ENCODE measurements at regions of chr18 and their contacts with region 1.

Region 1: DNA sequence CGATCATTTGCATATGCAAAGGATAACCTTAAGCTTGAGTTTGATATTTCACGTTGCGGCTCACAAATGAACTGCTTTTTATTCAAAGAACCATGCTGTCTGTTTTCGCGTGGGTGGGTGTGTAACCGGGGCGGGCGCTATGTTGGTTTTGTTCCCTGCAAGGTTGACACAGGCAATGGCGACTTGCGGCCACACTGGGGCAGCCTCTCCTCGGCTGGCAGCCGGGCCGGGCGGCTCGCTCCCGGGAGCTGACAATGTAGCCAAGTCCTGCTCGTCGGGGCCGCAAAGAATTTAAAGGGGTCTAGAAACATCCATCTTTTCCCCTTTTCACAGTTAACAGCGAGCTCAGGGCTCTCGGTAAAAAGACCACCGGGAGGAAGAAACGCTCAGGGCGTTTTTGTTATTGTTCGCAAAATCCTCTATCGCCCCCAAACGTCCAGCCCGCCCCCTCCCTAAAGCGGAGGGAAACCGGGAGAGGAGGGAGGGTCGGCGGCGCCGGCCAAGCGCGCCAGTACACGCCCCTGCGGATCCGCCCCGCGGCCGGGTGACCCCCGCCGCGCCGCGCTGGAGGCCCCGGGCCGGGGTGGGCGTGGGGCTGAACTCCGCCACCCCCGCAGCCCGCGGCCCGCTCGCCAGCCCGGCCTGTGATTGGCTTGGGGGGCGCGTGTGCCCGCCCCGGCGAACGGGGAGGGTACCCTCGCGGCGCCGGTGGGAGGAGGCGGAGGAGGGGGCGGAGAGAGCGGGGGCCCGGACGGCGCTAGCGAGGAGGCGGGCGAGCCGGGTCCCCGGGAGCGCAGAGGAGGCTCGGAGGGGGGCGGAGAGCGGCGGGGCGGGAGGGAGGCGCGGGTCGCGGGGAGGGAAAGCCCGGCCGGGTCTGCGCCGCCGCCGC is at the start of gene NEDD4L:
- DNase-seq: peak; percentile 91
- H3K4me3 ChIP-seq: peak within 1 kb of the TSS; percentile 87
- H3K27ac ChIP-seq: peak within 1 kb of the TSS; percentile 78
- H3K4me1 ChIP-seq: peaks cover 5% of the 10 kb centered on the region
- H3K27me3 ChIP-seq: no peaks in the 10 kb centered on the region
- CTCF ChIP-seq: peak; percentile 92
- total RNA-seq, gene NEDD4L: 15.3 and 23.8 TPM in 2 replicates

Region 2: GRCh38 chr18:57881818-57882413 is 161.8 kb before region 1 on chr18:
- CTCF ChIA-PET with region 1: no interaction called
- POLR2A ChIA-PET with region 1: no interaction called
- intact Hi-C with region 1: loop called (anchors 5 kb)
- DNase-seq: peak; percentile 87
- H3K4me3 ChIP-seq: no peak overlapping the region
- H3K27ac ChIP-seq: no peak overlapping the region
- H3K4me1 ChIP-seq: no peaks in the 10 kb centered on the region
- H3K27me3 ChIP-seq: no peaks in the 10 kb centered on the region
- CTCF ChIP-seq: peak; percentile 95

Region 3: DNA sequence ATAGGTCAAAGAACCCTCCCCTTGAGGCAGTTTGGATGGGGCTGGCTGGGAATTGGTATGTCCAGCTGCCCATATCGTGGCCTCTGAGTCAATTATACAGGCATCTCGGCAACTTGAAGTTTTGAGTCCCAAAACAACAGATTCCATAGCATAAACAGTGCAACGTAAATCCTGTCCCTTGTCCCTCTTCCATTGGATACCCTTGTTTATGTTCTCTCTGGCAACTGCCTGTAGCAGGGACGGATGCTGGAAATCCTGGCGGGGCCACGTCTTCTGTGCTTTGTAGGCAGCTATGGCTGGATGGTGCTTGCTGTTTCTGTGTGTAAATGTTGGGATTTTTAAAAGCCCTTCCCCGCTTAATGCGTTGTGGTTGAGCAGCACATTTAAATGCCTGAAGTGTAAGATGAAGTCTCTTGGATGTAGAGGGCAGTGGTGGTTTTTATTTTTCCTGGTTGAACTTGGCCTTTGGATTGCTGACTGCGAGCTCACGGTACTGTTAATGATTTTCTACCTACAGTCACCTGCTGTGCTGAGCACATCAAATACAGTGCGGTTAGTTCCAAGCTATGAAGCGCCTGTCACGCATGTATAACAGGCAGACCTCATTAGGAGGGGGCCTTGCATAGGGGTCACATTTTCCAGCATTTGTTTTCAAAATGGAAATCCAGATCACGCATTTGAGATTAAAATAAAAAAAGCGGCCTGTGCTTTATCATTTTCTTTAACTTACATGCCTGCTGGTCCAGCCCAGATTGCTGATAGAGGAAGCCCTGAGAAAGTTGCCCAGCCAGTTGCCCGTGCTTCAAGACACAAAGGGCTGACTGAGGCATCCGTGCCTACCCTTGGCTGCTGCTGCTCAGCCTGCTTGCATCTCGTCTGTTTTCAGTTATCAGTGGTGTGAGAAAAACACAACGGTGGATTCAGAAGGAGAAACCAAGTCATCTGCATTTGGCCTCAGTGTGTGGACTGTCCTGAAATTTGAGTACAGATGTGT is 84.9 kb after region 1 on chr18:
- CTCF ChIA-PET with region 1: interaction called, 3 read pairs
- POLR2A ChIA-PET with region 1: no interaction called
- intact Hi-C with region 1: loop called (anchors 5 kb)
- DNase-seq: no peak
- H3K4me3 ChIP-seq: no peak overlapping the region
- H3K27ac ChIP-seq: no peak overlapping the region
- H3K4me1 ChIP-seq: no peaks in the 10 kb centered on the region
- H3K27me3 ChIP-seq: peaks cover 25% of the 10 kb centered on the region
- CTCF ChIP-seq: no peak

Region 4: GRCh38 chr18:58176915-58177717 is 133.4 kb after region 1 on chr18:
- CTCF ChIA-PET with region 1: no interaction called
- POLR2A ChIA-PET with region 1: no interaction called
- intact Hi-C with region 1: loop called (anchors 5 kb)
- DNase-seq: peak; percentile 24
- H3K4me3 ChIP-seq: no peak overlapping the region
- H3K27ac ChIP-seq: no peak overlapping the region
- H3K4me1 ChIP-seq: no peaks in the 10 kb centered on the region
- H3K27me3 ChIP-seq: no peaks in the 10 kb centered on the region
- CTCF ChIP-seq: no peak

Region 5: DNA sequence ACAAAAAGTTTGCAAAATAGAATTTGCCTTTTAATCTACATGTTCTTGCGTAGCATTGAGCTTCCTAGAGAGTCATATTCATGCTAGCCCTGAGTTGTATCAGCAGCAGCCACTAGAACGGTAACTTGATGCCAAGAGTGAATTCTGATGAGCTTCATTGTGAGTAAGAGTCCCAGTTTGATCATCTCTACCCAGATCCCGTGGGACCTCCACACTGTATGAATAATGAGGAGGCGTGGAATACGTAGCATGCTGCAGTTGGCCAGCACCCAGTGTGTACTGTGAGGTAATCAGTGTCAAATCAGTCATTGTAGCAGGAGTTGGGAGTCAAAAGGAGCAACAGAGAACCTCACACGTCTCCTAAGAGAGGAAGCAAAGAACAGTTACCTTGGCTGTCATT is 198.1 kb after region 1 on chr18:
- CTCF ChIA-PET with region 1: no interaction called
- POLR2A ChIA-PET with region 1: no interaction called
- intact Hi-C with region 1: no loop called
- DNase-seq: peak; percentile 97
- H3K4me3 ChIP-seq: no peak overlapping the region
- H3K27ac ChIP-seq: peak overlapping the region; percentile 41
- H3K4me1 ChIP-seq: peaks cover 25% of the 10 kb centered on the region
- H3K27me3 ChIP-seq: no peaks in the 10 kb centered on the region
- CTCF ChIP-seq: no peak

Region 6: GRCh38 chr18:58493516-58494253 is 449.9 kb after region 1 on chr18:
- CTCF ChIA-PET with region 1: interaction called, 8 read pairs
- POLR2A ChIA-PET with region 1: no interaction called
- intact Hi-C with region 1: loop called (anchors 1 kb)
- DNase-seq: peak; percentile 86
- H3K4me3 ChIP-seq: no peak overlapping the region
- H3K27ac ChIP-seq: no peak overlapping the region
- H3K4me1 ChIP-seq: peaks cover 6% of the 10 kb centered on the region
- H3K27me3 ChIP-seq: no peaks in the 10 kb centered on the region
- CTCF ChIP-seq: peak; percentile 96

Measured in A673 (cell line).